ENCODE measurements at regions of chr7 and their contacts with region 1.

Region 1: GRCh38 chr7:148584154-148584827 is 6.3 kb upstream of the C7orf33 start:
- DNase-seq: peak; percentile 42
- H3K4me3 Mint-ChIP-seq: no peak overlapping the region
- H3K27ac Mint-ChIP-seq: no peak overlapping the region
- H3K4me1 Mint-ChIP-seq: peaks cover 17% of the 10 kb centered on the region
- H3K27me3 Mint-ChIP-seq: no peaks in the 10 kb centered on the region

Region 2: GRCh38 chr7:148563583-148564274 is 20.6 kb before region 1 on chr7:
- CTCF ChIA-PET with region 1: no interaction called
- POLR2A ChIA-PET with region 1: no interaction called
- intact Hi-C with region 1: loop called (anchors 1 kb)
- DNase-seq: no peak
- H3K4me3 Mint-ChIP-seq: peak overlapping the region; percentile 31
- H3K27ac Mint-ChIP-seq: peak overlapping the region; percentile 89
- H3K4me1 Mint-ChIP-seq: peaks cover 17% of the 10 kb centered on the region
- H3K27me3 Mint-ChIP-seq: peaks cover 7% of the 10 kb centered on the region

Region 3: DNA sequence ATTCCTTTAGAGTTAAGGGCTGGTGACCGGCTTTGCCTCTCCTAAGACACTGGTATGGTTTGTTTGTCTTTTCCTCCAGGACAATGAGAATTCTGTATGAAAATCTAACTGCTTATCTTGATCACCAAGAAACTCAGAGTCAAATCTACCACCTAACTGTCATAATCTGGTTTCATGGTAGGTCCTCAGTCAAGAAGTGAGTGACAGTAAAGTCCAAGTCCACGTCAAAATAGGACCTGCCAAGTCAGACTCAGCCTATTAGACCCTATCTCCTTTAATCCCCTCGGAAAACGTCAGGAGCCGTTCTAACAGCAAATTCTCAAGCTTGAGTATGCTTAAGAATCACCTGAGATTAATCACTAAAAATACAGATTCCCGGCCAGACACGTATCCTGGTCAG is 43.7 kb after region 1 on chr7:
- CTCF ChIA-PET with region 1: no interaction called
- POLR2A ChIA-PET with region 1: no interaction called
- intact Hi-C with region 1: loop called (anchors 1 kb)
- DNase-seq: no peak
- H3K4me3 Mint-ChIP-seq: no peak overlapping the region
- H3K27ac Mint-ChIP-seq: no peak overlapping the region
- H3K4me1 Mint-ChIP-seq: peaks cover 36% of the 10 kb centered on the region
- H3K27me3 Mint-ChIP-seq: peaks cover 8% of the 10 kb centered on the region

Region 4: GRCh38 chr7:148633761-148634160 is 49.5 kb after region 1 on chr7:
- CTCF ChIA-PET with region 1: interaction called, 3 read pairs
- POLR2A ChIA-PET with region 1: no interaction called
- intact Hi-C with region 1: loop called (anchors 1 kb)
- DNase-seq: peak; percentile 49
- H3K4me3 Mint-ChIP-seq: no peak overlapping the region
- H3K27ac Mint-ChIP-seq: peak overlapping the region; percentile 5
- H3K4me1 Mint-ChIP-seq: peaks cover 22% of the 10 kb centered on the region
- H3K27me3 Mint-ChIP-seq: peaks cover 3% of the 10 kb centered on the region

Region 5: DNA sequence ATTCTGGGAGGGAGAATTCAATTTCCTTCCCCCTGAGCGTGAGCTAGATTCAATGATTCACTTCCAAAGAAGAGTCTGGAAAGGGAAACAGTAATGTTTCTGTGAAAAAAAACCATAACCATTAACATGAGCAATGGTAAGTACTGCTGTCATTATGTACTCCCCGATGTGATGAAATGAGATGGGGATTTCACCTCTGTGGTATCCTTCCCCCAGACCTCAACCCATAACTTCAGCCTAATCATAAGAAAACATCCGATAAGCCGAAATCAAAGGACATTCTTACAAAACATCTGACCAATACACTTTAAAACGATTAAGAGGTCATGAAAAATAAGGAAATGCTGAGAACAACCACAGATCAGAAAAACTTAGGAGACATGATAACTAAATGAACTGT is 272.6 kb after region 1 on chr7:
- CTCF ChIA-PET with region 1: interaction called, 3 read pairs
- POLR2A ChIA-PET with region 1: interaction called, 3 read pairs
- intact Hi-C with region 1: loop called (anchors 10 kb)
- DNase-seq: peak; percentile 50
- H3K4me3 Mint-ChIP-seq: peak overlapping the region; percentile 40
- H3K27ac Mint-ChIP-seq: peak overlapping the region; percentile 82
- H3K4me1 Mint-ChIP-seq: peaks cover 39% of the 10 kb centered on the region
- H3K27me3 Mint-ChIP-seq: no peaks in the 10 kb centered on the region

Region 6: GRCh38 chr7:148914208-148914777 is 330.0 kb after region 1 on chr7:
- CTCF ChIA-PET with region 1: interaction called, 3 read pairs
- POLR2A ChIA-PET with region 1: interaction called, 3 read pairs
- intact Hi-C with region 1: loop called (anchors 1 kb)
- DNase-seq: peak; percentile 87
- H3K4me3 Mint-ChIP-seq: peak overlapping the region; percentile 62
- H3K27ac Mint-ChIP-seq: peak overlapping the region; percentile 93
- H3K4me1 Mint-ChIP-seq: peaks cover 66% of the 10 kb centered on the region
- H3K27me3 Mint-ChIP-seq: no peaks in the 10 kb centered on the region